ENCODE measurements at regions of chr15 and their contacts with region 1.

Region 1: GRCh38 chr15:70121624-70122297 is 24.0 kb upstream of the TLE3 start:
- DNase-seq: peak in 4 of 5 donors; percentile 36 to 64 (median 48)
- ATAC-seq: peak; percentile 45 to 84 (median 65)
- H3K4me3 ChIP-seq: no peak overlapping the region
- H3K27ac ChIP-seq: peak overlapping the region in 4 of 12 donors; percentile 10 to 43 (median 23)
- H3K4me1 ChIP-seq: peaks cover 0 to 23% (median 8%) of the 10 kb centered on the region in 12 donors
- H3K27me3 ChIP-seq: peaks cover 0 to 8% (median 0%) of the 10 kb centered on the region in 9 donors
- CTCF ChIP-seq: no peak
- POLR2A ChIP-seq: no peak

Region 2: GRCh38 chr15:69848500-69849231 is 273.1 kb before region 1 on chr15:
- intact Hi-C with region 1: no loop called
- DNase-seq: no peak
- ATAC-seq: no peak
- H3K4me3 ChIP-seq: no peak overlapping the region
- H3K27ac ChIP-seq: no peak overlapping the region
- H3K4me1 ChIP-seq: peaks cover 0 to 6% (median 0%) of the 10 kb centered on the region in 12 donors
- H3K27me3 ChIP-seq: peaks cover 0 to 17% (median 0%) of the 10 kb centered on the region in 9 donors
- CTCF ChIP-seq: no peak
- POLR2A ChIP-seq: no peak

Region 3: DNA sequence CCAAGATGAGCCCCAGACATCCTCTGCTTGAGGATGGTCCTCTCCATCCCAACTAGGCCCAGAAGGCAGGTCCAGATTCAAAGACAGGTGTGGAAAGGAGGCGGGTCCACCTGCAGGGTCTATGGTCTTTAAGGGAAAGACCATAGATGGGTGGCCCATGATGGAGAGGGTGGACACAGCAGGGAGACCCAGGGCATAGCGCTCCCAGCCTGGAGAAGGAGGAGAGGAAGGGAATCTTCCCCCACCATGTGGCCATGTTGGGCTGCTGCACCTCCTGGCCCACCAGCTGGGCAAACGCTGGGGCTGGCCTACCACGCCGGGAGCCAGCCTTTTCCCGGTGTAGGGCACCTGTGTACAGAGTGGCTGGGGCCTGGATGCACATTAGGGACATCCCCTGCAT is 241.1 kb after region 1 on chr15:
- intact Hi-C with region 1: loop called in 1 of 10 experiments (anchors 10 kb)
- DNase-seq: peak in 4 of 5 donors; percentile 35 to 70 (median 40)
- ATAC-seq: peak in 3 of 4 donors; percentile 82 to 89 (median 87)
- H3K4me3 ChIP-seq: no peak overlapping the region
- H3K27ac ChIP-seq: no peak overlapping the region
- H3K4me1 ChIP-seq: no peaks in the 10 kb centered on the region
- H3K27me3 ChIP-seq: peaks cover 0 to 16% (median 0%) of the 10 kb centered on the region in 9 donors
- CTCF ChIP-seq: peak; percentile 68 to 82 (median 71)
- POLR2A ChIP-seq: no peak

Region 4: DNA sequence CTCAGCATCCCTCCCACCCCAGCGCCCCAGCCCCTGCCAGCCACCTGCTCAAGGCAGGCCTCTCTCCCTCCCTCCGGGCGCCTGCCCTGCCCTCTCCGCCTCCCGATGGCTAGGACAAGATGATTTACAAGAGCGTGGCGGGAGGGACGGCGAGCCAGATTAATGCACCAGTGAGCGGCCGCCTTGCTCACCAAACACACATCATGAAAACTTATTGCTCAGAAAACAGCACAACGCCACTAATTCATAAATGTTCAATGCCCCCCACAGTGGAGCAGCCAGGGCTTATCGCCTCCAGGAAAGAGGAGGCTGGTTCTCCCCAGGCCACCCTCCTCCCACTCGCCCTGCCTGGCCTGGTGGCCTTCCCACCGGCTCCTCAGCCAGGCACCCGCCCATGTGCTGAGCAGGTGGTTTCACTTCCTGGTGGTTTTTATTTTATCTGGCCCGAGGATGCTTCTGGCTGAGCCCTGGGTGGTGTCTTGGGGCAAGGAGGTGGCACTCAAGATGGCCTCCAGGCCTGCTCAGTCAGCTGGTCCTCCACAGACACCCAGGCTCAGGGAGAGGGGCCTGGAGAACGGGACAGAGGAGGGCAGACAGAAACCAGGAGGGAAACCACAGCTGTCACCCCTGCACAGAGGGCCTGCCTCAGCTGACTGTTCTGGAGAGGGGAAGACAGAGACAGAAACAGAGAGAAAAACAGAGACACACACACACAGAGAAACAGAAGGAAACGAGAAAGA is 356.7 kb after region 1 on chr15:
- intact Hi-C with region 1: no loop called
- DNase-seq: peak in 3 of 5 donors; percentile 23 to 68 (median 46)
- ATAC-seq: peak; percentile 32 to 56 (median 46)
- H3K4me3 ChIP-seq: no peak overlapping the region
- H3K27ac ChIP-seq: peak overlapping the region in 1 of 12 donors; percentile 81
- H3K4me1 ChIP-seq: peaks cover 0 to 66% (median 14%) of the 10 kb centered on the region in 12 donors
- H3K27me3 ChIP-seq: peaks cover 0 to 3% (median 0%) of the 10 kb centered on the region in 9 donors
- CTCF ChIP-seq: no peak
- POLR2A ChIP-seq: no peak

Region 5: GRCh38 chr15:72105111-72105510 is 1983.3 kb after region 1 on chr15:
- intact Hi-C with region 1: no loop called
- DNase-seq: no peak
- ATAC-seq: no peak
- H3K4me3 ChIP-seq: no peak overlapping the region
- H3K27ac ChIP-seq: no peak overlapping the region
- H3K4me1 ChIP-seq: peaks cover 0 to 43% (median 8%) of the 10 kb centered on the region in 12 donors
- H3K27me3 ChIP-seq: no peaks in the 10 kb centered on the region
- CTCF ChIP-seq: no peak
- POLR2A ChIP-seq: no peak